K562 (cell line): ENCODE measurements at regions of chr13 and their contacts with region 1.

Region 1: GRCh38 chr13:41668130-41668757 is 210.9 kb downstream of the RGCC start:
- DNase-seq: peak; percentile 28 to 75 (median 38)
- ATAC-seq: peak; percentile 95
- H3K4me3 ChIP-seq: no peak overlapping the region
- H3K27ac ChIP-seq: no peak overlapping the region
- H3K4me1 ChIP-seq: no peaks in the 10 kb centered on the region; a peak in 1 of 5 replicates
- H3K27me3 ChIP-seq: no peaks in the 10 kb centered on the region
- CTCF ChIP-seq: peak; percentile 69 to 80 (median 73)
- EP300 ChIP-seq: no peak
- POLR2A ChIP-seq: no peak
- RAD21 ChIP-seq: peak; percentile 70 to 88

Region 2: DNA sequence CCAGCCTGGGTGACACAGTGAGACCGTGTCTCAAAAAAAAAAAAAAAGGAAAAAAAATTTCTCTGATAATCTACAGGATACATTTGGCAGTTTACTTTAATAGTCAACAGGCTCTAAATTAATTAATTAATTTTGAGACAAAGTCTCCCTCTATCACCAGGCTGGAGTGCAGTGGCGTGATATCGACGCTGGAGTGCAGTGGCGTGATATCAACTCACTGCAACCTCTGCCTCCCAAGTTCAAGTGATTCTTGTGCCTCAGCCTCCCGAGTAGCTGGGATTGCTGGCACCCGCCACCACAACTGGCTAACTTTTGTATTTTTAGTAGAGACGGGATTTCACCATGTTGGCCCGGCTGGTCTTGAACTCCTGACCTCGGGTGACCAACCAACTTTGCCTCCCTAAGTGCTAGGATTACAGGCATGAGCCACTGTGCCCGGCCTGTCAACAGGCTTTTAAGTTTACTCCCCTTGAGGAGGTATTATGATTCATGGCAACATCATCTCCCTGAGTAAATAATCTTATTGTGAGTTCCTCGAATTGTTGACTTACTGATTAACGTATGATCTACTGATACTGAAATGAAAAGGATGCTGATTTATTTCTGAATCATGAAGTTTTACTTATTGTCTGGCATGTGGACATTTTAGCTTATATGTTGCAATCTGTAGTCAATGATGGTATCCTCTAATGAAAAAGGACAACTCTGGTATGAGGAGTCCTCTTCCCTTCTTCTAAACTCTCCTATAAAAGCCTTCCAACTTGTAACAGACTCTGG is 383.5 kb before region 1 on chr13:
- CTCF ChIA-PET with region 1: no interaction called
- POLR2A ChIA-PET with region 1: no interaction called
- in situ Hi-C with region 1: no loop called
- intact Hi-C with region 1: no loop called
- DNase-seq: no peak
- ATAC-seq: no peak
- H3K4me3 ChIP-seq: no peak overlapping the region
- H3K27ac ChIP-seq: no peak overlapping the region
- H3K4me1 ChIP-seq: no peaks in the 10 kb centered on the region; a peak in 1 of 5 replicates
- H3K27me3 ChIP-seq: no peaks in the 10 kb centered on the region; a peak in 1 of 5 replicates
- CTCF ChIP-seq: no peak
- EP300 ChIP-seq: no peak
- POLR2A ChIP-seq: no peak
- RAD21 ChIP-seq: no peak

Region 3: DNA sequence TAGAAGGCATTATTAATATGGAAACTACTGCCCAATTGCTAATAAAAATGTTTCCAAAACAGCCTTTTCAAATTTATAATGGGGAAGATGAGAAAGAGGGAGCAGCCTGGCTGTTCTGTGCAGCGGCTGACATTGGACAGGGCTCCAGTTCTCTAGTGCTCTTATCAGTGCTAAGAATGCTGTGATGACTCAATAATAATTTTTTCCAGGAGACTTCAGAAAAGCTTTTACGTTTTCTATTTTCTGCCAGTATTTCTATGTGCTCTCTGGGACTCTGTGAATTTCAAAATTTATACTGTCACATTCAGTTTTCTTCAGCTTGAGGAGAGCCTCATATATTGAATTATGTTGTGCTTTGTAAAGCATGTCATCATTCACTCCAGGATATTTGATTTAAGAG is 83.0 kb after region 1 on chr13:
- CTCF ChIA-PET with region 1: no interaction called
- POLR2A ChIA-PET with region 1: no interaction called
- in situ Hi-C with region 1: no loop called
- intact Hi-C with region 1: loop called (anchors 5 kb)
- DNase-seq: peak; percentile 25 to 42 (median 37)
- ATAC-seq: peak; percentile 88
- H3K4me3 ChIP-seq: no peak overlapping the region
- H3K27ac ChIP-seq: peak overlapping the region; percentile 53; the same call in 1 of the 3 replicates
- H3K4me1 ChIP-seq: peaks cover 0 to 14% of the 10 kb centered on the region in 2 experiments; a peak in 2 of 5 replicates
- H3K27me3 ChIP-seq: no peaks in the 10 kb centered on the region
- CTCF ChIP-seq: no peak
- EP300 ChIP-seq: no peak
- POLR2A ChIP-seq: no peak
- RAD21 ChIP-seq: no peak

Region 4: GRCh38 chr13:41985788-41986508 is 317.7 kb after region 1 on chr13:
- CTCF ChIA-PET with region 1: interaction called, 3 read pairs
- POLR2A ChIA-PET with region 1: no interaction called
- in situ Hi-C with region 1: no loop called
- intact Hi-C with region 1: loop called (anchors 10 kb)
- DNase-seq: no peak
- ATAC-seq: no peak
- H3K4me3 ChIP-seq: no peak overlapping the region
- H3K27ac ChIP-seq: no peak overlapping the region
- H3K4me1 ChIP-seq: no peaks in the 10 kb centered on the region
- H3K27me3 ChIP-seq: no peaks in the 10 kb centered on the region
- CTCF ChIP-seq: no peak
- EP300 ChIP-seq: no peak
- POLR2A ChIP-seq: no peak
- RAD21 ChIP-seq: no peak

Region 5: GRCh38 chr13:42110410-42111155 is 442.3 kb after region 1 on chr13:
- CTCF ChIA-PET with region 1: interaction called, 5 read pairs
- POLR2A ChIA-PET with region 1: no interaction called
- in situ Hi-C with region 1: loop called (anchors 10 kb)
- intact Hi-C with region 1: loop called (anchors 1 kb)
- DNase-seq: peak; percentile 24 to 59 (median 25)
- ATAC-seq: peak; percentile 67
- H3K4me3 ChIP-seq: no peak overlapping the region
- H3K27ac ChIP-seq: no peak overlapping the region
- H3K4me1 ChIP-seq: peaks cover 0 to 10% of the 10 kb centered on the region in 2 experiments; a peak in 1 of 5 replicates
- H3K27me3 ChIP-seq: no peaks in the 10 kb centered on the region
- CTCF ChIP-seq: peak; percentile 41 to 71 (median 50); a peak in 5 of 6 replicates
- EP300 ChIP-seq: no peak
- POLR2A ChIP-seq: no peak
- RAD21 ChIP-seq: peak; percentile 67 to 82

Region 6: GRCh38 chr13:42215578-42216421 is 547.6 kb after region 1 on chr13:
- CTCF ChIA-PET with region 1: no interaction called
- POLR2A ChIA-PET with region 1: no interaction called
- in situ Hi-C with region 1: no loop called
- intact Hi-C with region 1: loop called (anchors 5 kb)
- DNase-seq: peak; percentile 4 to 45 (median 10)
- ATAC-seq: peak; percentile 92
- H3K4me3 ChIP-seq: no peak overlapping the region
- H3K27ac ChIP-seq: no peak overlapping the region
- H3K4me1 ChIP-seq: no peaks in the 10 kb centered on the region; a peak in 2 of 5 replicates
- H3K27me3 ChIP-seq: no peaks in the 10 kb centered on the region
- CTCF ChIP-seq: peak; percentile 52 to 67 (median 66); a peak in 5 of 6 replicates
- EP300 ChIP-seq: no peak
- POLR2A ChIP-seq: no peak
- RAD21 ChIP-seq: peak; percentile 64 to 76